IMR-90 (cell line): ENCODE measurements at regions of chr15 and their contacts with region 1.

Region 1: GRCh38 chr15:71743861-71744382 is 66.4 kb upstream of the NR2E3 start:
- DNase-seq: peak; percentile 69
- ATAC-seq: peak; percentile 71
- H3K4me3 ChIP-seq: no peak overlapping the region
- H3K27ac ChIP-seq: no peak overlapping the region
- H3K4me1 ChIP-seq: peaks cover 13% of the 10 kb centered on the region
- H3K27me3 ChIP-seq: no peaks in the 10 kb centered on the region
- CTCF ChIP-seq: peak; percentile 74
- POLR2A ChIP-seq: no peak
- RAD21 ChIP-seq: peak; percentile 60

Region 2: DNA sequence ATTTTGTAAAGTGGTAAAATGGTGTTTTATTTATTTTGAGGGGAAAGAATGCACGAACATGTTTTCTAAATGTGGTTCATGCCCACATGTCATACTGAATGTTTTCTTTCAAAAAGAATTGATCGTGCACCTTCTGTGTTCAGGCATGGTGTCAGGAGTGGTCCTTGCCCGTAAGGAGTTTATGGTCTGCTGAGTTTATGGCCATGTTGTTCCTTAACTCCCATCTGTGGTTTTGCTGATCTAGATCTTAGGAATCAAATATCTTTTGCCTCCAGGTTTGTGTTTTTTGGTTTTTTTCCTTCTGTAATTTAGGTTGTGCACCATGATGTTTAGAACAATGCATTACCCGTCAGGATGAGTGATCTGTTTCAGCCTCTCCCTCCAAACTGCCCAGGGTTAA is 238.0 kb before region 1 on chr15:
- CTCF ChIA-PET with region 1: no interaction called
- POLR2A ChIA-PET with region 1: interaction called, 19 read pairs
- dilution Hi-C with region 1: no loop called
- in situ Hi-C with region 1: no loop called
- intact Hi-C with region 1: no loop called
- DNase-seq: no peak
- ATAC-seq: no peak
- H3K4me3 ChIP-seq: no peak overlapping the region
- H3K27ac ChIP-seq: no peak overlapping the region
- H3K4me1 ChIP-seq: peaks cover 1% of the 10 kb centered on the region; the same call in 1 of the 2 replicates
- H3K27me3 ChIP-seq: no peaks in the 10 kb centered on the region
- CTCF ChIP-seq: no peak
- POLR2A ChIP-seq: no peak
- RAD21 ChIP-seq: no peak